ENCODE measurements at regions of chr11 and their contacts with region 1.

Region 1: DNA sequence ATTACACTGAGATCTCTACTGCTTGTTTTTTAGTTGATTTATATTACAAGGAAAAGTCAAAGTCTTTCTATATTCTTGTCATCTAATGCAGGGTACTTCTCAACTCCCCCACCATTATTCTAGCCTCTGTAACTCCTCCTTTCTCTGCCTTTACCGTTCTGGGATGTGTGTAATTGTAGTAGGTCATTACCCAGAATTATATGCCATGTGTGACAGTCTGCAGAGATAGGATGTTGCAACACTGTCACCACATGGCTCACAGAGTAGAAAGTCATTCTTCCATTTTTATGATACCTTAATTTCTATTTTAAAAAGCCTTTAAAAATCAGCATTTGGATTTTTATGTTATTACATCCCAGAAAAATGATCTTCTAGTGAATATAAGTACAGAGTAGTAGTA is 32.7 kb downstream of the ZNF143 start:
- DNase-seq: no peak
- ATAC-seq: no peak
- H3K4me3 ChIP-seq: no peak overlapping the region
- H3K27ac ChIP-seq: no peak overlapping the region
- H3K4me1 ChIP-seq: no peaks in the 10 kb centered on the region
- H3K27me3 ChIP-seq: no peaks in the 10 kb centered on the region
- CTCF ChIP-seq: no peak
- POLR2A ChIP-seq: no peak

Region 2: DNA sequence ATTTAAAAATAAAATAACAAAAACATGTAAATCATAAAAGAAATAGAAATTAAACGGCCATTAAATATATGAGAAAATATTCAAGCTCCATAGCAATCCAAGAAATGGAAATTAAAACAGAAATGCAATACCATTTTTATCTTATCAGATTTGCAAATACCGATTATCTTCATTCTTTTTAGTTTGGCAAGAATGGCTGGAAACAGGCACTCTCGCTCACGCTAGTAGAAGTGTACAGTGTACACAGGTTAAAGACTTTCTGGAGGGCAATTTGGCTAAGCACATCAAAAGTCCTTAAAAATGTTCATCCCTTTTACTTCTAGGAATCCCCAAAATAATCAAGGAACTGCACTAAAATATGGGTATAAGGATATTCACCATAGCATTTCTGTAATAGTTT is 642.2 kb before region 1 on chr11:
- intact Hi-C with region 1: no loop called
- DNase-seq: no peak
- ATAC-seq: no peak
- H3K4me3 ChIP-seq: no peak overlapping the region
- H3K27ac ChIP-seq: no peak overlapping the region
- H3K4me1 ChIP-seq: no peaks in the 10 kb centered on the region
- H3K27me3 ChIP-seq: no peaks in the 10 kb centered on the region
- CTCF ChIP-seq: no peak
- POLR2A ChIP-seq: no peak

Region 3: DNA sequence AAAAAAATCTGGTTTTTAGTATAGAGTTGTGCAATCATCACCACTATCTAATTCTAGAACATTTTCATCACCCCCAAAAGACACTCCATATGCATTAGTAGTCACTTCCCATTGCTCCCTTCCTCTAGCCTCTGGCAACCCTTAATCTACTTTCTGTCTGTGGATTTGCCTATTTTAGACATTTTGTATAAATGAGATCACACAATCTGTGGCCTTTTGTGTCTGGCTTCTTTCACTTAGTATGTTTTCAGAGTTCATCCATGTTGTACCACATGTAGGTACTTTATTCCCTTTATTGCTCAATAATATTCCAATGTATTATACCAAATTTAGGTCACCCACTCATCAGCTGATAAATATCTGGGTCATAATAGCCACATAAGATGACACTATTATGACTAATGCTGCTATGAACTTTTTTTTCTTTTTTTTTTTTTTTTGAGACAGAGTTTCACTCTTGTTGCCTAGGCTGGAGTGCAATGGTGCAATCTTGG is 334.5 kb before region 1 on chr11:
- intact Hi-C with region 1: loop called in 1 of 10 experiments (anchors 10 kb)
- DNase-seq: no peak
- ATAC-seq: peak in 2 of 4 donors; percentile 62 to 85
- H3K4me3 ChIP-seq: no peak overlapping the region
- H3K27ac ChIP-seq: peak overlapping the region in 1 of 12 donors; percentile 51
- H3K4me1 ChIP-seq: peaks cover 0 to 26% (median 0%) of the 10 kb centered on the region in 12 donors
- H3K27me3 ChIP-seq: no peaks in the 10 kb centered on the region
- CTCF ChIP-seq: no peak
- POLR2A ChIP-seq: no peak

Region 4: GRCh38 chr11:9170450-9170849 is 323.0 kb before region 1 on chr11:
- intact Hi-C with region 1: loop called in 1 of 10 experiments (anchors 10 kb)
- DNase-seq: no peak
- ATAC-seq: peak in 2 of 4 donors; percentile 56 to 74
- H3K4me3 ChIP-seq: no peak overlapping the region
- H3K27ac ChIP-seq: no peak overlapping the region
- H3K4me1 ChIP-seq: peaks cover 0 to 7% (median 0%) of the 10 kb centered on the region in 12 donors
- H3K27me3 ChIP-seq: no peaks in the 10 kb centered on the region
- CTCF ChIP-seq: no peak
- POLR2A ChIP-seq: no peak

Region 5: DNA sequence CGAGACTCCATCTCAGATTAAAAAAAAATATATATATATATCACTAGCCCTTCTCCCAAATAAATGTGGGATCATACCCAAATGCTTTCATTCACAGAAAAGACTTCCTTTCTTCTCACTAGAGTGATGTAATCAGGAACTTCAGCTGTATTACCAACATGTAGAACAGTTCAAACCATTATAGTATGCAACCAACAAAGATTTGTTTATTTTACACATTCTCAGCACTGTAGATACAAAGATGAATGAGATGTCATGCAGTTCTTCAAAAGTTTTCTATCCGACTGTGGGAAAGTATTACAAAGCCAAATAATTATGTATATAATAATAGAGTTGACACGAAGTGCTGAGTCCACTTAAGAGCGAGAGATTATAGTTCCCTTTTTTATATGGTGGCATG is 54.9 kb before region 1 on chr11:
- intact Hi-C with region 1: loop called in 1 of 10 experiments (anchors 10 kb)
- DNase-seq: no peak
- ATAC-seq: no peak
- H3K4me3 ChIP-seq: no peak overlapping the region
- H3K27ac ChIP-seq: no peak overlapping the region
- H3K4me1 ChIP-seq: no peaks in the 10 kb centered on the region
- H3K27me3 ChIP-seq: no peaks in the 10 kb centered on the region
- CTCF ChIP-seq: no peak
- POLR2A ChIP-seq: no peak